PC-3 (cell line): ENCODE measurements at regions of chr2 and their contacts with region 1.

Region 1: DNA sequence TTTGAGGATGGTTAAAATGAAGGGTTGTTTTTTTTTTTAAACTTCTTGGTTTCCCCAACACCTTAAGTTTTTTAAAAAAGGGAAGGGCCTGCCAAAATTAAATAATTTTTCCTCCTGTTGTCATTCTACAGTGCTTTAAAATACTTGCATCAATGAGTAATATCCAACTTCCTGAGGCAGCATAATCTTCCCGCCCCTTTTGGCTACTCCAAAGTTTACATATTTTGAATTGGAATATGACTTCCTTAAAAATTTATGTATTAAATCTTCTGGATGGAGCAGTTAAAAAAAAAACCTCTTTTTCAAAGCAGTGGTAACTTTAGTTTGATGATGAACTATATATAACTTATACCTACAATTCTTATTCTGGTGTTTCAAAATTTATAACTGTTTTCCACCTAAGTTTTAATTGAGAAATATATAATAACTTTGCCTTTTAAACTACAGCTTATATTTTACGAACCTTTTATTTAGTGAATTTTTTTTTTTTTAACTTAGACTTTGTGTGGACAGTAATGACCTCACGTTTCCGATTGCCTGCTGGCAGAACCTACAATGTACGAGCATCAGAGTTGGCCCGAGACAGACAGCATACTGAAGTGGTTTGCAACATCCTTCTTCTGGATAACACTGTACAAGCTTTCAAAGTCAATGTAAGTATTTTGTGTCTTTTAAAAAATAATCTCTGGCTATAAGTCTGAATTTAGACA is 49.8 kb downstream of the PTPN4 start:
- DNase-seq: peak; percentile 73
- ATAC-seq: peak; percentile 79
- H3K4me3 ChIP-seq: peak overlapping the region; percentile 40; the same call in 1 of the 2 replicates
- H3K27ac ChIP-seq: peak overlapping the region; percentile 71
- H3K4me1 ChIP-seq: peaks cover 25% of the 10 kb centered on the region
- H3K27me3 ChIP-seq: no peaks in the 10 kb centered on the region
- CTCF ChIP-seq: no peak

Region 2: DNA sequence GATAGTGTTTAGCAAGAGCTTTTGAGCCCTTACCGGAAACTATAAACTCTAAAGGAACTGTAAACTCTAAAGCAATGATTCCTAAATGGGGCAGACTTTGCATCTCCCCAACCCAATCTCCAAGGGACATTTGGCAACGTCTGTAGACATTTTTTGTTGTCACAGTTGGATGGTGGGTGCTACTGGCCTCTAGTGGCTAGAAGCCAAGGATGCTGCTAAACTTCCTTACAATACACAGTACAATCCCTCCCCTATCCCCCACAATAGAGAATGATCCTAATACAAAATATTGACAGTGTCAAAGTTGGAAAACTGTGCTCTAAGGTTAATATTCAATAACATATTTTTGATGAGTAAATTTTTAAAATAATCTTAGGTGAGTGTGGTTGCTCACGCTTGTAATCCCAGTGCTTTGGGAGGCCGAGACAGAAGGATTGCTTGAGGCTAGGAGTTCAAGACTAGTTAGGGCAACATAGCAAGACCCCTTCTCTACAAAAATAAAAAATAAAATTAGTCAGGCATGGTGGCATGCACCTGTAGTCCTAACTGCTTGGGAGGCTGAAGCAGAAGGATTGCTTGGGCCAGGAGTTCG is 17.0 kb after region 1 on chr2:
- CTCF ChIA-PET with region 1: interaction called, 12 read pairs
- POLR2A ChIA-PET with region 1: no interaction called
- intact Hi-C with region 1: no loop called
- DNase-seq: peak; percentile 67
- ATAC-seq: peak; percentile 57
- H3K4me3 ChIP-seq: no peak overlapping the region
- H3K27ac ChIP-seq: no peak overlapping the region
- H3K4me1 ChIP-seq: peaks cover 30% of the 10 kb centered on the region
- H3K27me3 ChIP-seq: no peaks in the 10 kb centered on the region
- CTCF ChIP-seq: peak; percentile 88

Region 3: GRCh38 chr2:119943058-119943457 is 133.6 kb after region 1 on chr2:
- CTCF ChIA-PET with region 1: no interaction called
- POLR2A ChIA-PET with region 1: no interaction called
- intact Hi-C with region 1: no loop called
- DNase-seq: no peak
- ATAC-seq: no peak
- H3K4me3 ChIP-seq: no peak overlapping the region
- H3K27ac ChIP-seq: no peak overlapping the region
- H3K4me1 ChIP-seq: no peaks in the 10 kb centered on the region
- H3K27me3 ChIP-seq: no peaks in the 10 kb centered on the region
- CTCF ChIP-seq: no peak

Region 4: DNA sequence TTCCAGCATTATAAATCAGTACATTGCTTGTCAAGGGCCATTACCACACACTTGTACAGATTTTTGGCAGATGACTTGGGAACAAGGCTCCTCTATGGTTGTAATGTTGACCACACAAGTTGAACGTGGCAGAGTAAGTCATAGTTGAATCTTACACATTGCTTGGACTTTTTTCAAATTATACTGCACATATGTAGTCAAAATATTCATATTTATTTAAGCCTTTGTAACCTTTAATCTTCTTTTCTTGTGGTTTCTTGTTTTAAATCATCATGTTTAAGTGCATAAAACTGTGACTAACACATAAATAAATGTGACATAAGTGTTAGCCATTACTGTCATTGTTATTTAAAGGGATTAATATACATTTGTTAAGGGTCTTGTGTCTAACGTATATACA is 151.3 kb after region 1 on chr2:
- CTCF ChIA-PET with region 1: no interaction called
- POLR2A ChIA-PET with region 1: no interaction called
- intact Hi-C with region 1: no loop called
- DNase-seq: peak; percentile 18
- ATAC-seq: peak; percentile 48
- H3K4me3 ChIP-seq: no peak overlapping the region
- H3K27ac ChIP-seq: no peak overlapping the region
- H3K4me1 ChIP-seq: 0 out of 2 replicates have a peak, but pooled peaks cover 4% of the 10 kb centered on the region
- H3K27me3 ChIP-seq: no peaks in the 10 kb centered on the region
- CTCF ChIP-seq: no peak

Region 5: GRCh38 chr2:120305296-120305695 is 495.8 kb after region 1 on chr2:
- CTCF ChIA-PET with region 1: no interaction called
- POLR2A ChIA-PET with region 1: no interaction called
- intact Hi-C with region 1: no loop called
- DNase-seq: peak; percentile 28
- ATAC-seq: peak; percentile 71
- H3K4me3 ChIP-seq: no peak overlapping the region
- H3K27ac ChIP-seq: no peak overlapping the region
- H3K4me1 ChIP-seq: no peaks in the 10 kb centered on the region
- H3K27me3 ChIP-seq: no peaks in the 10 kb centered on the region
- CTCF ChIP-seq: peak; percentile 61

Region 6: GRCh38 chr2:120647491-120647890 is 838.0 kb after region 1 on chr2:
- CTCF ChIA-PET with region 1: no interaction called
- POLR2A ChIA-PET with region 1: interaction called, 10 read pairs
- intact Hi-C with region 1: no loop called
- DNase-seq: peak; percentile 49
- ATAC-seq: peak; percentile 33; the same call in 1 of the 2 replicates
- H3K4me3 ChIP-seq: no peak overlapping the region
- H3K27ac ChIP-seq: peak overlapping the region; percentile 42
- H3K4me1 ChIP-seq: 0 out of 2 replicates have a peak, but pooled peaks cover 3% of the 10 kb centered on the region
- H3K27me3 ChIP-seq: no peaks in the 10 kb centered on the region
- CTCF ChIP-seq: no peak